ENCODE measurements at regions of chr16 and their contacts with region 1.

Region 1: DNA sequence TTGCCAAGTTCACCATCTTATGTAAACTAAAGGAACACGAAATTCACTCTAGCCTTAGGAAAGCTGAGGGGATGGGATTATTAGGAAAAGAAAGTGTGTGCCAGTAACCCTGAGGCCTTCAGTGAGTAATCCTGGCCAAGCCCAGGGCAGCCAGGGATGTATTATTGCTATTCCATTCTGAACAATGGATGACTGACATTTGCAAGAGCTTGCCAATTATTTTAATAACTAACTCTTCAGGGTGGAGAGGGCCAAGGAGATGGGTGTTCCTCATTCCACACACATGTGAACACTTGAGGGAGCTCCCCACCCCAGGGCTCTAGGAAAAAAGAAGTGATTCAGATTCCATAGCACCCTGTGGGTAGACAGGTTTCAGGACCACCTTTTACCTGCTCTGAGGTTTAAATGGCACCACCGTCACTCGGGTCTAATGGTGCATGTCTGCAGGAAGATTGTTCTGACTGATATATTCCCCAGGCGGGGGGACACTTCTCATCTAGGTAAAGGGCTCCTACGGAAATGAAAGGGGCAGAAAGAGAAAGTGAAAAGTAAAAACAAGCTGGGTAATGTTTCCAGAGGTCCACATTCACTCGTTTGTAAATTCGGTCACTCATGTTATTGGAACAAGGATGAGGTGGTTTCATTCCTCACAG is 41.5 kb downstream of the TK2 start:
- DNase-seq: peak; percentile 80 to 99
- H3K4me3 ChIP-seq: peak overlapping the region; percentile 15; the same call in 1 of the 2 replicates
- H3K27ac ChIP-seq: peak overlapping the region; percentile 81
- H3K4me1 ChIP-seq: peaks cover 78% of the 10 kb centered on the region
- H3K27me3 ChIP-seq: no peaks in the 10 kb centered on the region
- CTCF ChIP-seq: no peak; the same call in 1 of the 2 replicates

Region 2: GRCh38 chr16:66199189-66199588 is 309.2 kb before region 1 on chr16:
- CTCF ChIA-PET with region 1: no interaction called
- POLR2A ChIA-PET with region 1: no interaction called
- intact Hi-C with region 1: no loop called
- DNase-seq: no peak
- H3K4me3 ChIP-seq: no peak overlapping the region
- H3K27ac ChIP-seq: no peak overlapping the region
- H3K4me1 ChIP-seq: no peaks in the 10 kb centered on the region
- H3K27me3 ChIP-seq: peaks cover 53% of the 10 kb centered on the region
- CTCF ChIP-seq: no peak

Region 3: DNA sequence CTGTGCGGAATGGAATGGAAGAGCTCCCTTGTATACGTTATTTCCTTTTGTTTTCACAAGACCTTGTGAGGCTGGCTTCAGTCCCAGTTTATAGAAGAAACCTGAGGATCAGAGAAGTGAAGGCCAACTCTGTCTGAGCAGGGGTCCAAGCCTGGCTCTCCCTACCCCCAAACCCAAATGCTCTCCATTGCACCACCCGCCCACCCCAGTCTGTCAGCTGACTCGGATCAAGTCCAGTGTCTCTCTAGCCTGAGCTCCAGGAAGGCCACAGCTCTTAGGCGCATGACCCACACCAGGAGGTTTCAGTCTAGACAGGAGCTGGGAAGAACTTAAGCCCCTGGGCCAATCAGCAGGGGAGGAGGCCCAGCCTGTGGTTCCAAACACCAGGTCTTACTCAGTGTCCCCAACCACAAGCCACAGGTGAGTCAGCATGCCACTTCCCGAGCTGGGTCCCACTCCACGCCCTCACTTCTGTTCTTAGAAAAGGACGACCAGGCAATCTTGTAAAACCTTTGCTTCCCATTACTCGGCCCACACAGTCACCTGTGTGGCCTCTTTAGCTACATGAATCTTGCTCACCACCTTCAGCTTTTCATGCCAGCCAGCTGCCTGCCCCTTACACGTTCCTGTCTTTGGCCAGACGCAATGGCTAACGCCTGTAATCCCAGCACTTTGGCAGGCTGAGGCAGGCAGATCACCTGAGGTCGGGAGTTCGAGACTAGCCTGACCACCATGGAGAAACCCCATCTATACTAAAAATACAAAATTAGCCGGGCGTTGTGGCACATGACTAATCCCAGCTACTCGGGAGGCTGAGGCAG is 13.8 kb after region 1 on chr16:
- CTCF ChIA-PET with region 1: interaction called, 10 read pairs
- POLR2A ChIA-PET with region 1: interaction called, 5 read pairs
- intact Hi-C with region 1: loop called (anchors 1 kb)
- DNase-seq: peak; percentile 91 to 98
- H3K4me3 ChIP-seq: no peak overlapping the region
- H3K27ac ChIP-seq: peak overlapping the region; percentile 82
- H3K4me1 ChIP-seq: peaks cover 49% of the 10 kb centered on the region
- H3K27me3 ChIP-seq: no peaks in the 10 kb centered on the region
- CTCF ChIP-seq: no peak

Region 4: DNA sequence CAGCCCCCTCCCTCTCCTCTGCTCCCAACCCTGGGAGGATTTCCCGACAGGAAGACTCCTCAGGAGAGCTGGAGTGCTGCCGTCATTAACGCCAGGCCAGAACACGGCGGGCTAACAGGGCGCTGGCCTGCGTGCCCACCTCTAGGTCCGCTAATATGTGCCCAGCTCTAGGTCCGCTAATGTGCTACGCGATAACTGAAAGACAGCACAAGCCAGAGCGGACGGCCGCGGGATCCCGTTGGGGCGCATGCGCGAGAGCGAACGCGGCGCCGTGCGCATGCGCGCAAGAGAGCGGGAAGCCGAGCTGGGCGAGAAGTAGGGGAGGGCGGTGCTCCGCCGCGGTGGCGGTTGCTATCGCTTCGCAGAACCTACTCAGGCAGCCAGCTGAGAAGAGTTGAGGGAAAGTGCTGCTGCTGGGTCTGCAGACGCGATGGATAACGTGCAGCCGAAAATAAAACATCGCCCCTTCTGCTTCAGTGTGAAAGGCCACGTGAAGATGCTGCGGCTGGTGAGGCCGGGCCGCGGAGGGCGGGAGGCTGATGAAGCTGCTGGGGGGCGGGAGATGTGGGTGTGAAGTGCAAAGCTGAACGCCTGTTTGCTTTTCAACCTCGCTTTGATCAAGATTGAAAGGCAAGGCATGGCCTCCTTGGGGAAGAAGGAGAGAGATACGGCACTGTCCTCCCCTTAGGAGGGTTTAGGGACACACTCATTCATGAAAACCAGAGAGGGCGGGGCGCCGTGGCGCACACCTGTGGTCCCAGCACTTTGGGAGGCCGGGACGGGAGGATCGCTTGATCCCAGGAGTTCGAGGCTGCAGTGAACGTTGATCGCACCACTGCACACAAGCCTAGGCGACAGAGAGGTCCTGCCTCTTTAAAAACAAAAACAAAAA is 44.1 kb after region 1 on chr16 and contains the start of gene CKLF:
- CTCF ChIA-PET with region 1: interaction called, 4 read pairs
- POLR2A ChIA-PET with region 1: interaction called, 4 read pairs
- intact Hi-C with region 1: loop called (anchors 2 kb)
- DNase-seq: peak; percentile 75 to 91
- H3K4me3 ChIP-seq: peak within 1 kb of the TSS; percentile 66
- H3K27ac ChIP-seq: no peak within 1 kb of the TSS
- H3K4me1 ChIP-seq: peaks cover 30% of the 10 kb centered on the region
- H3K27me3 ChIP-seq: no peaks in the 10 kb centered on the region
- CTCF ChIP-seq: no peak
- total RNA-seq, gene CKLF: 77.1 and 86.4 TPM in 2 replicates

Region 5: GRCh38 chr16:66580605-66581209 is 72.3 kb after region 1 on chr16:
- CTCF ChIA-PET with region 1: interaction called, 3 read pairs
- POLR2A ChIA-PET with region 1: interaction called, 4 read pairs
- intact Hi-C with region 1: loop called (anchors 1 kb)
- DNase-seq: peak; percentile 25 to 75
- H3K4me3 ChIP-seq: no peak overlapping the region
- H3K27ac ChIP-seq: no peak overlapping the region
- H3K4me1 ChIP-seq: peaks cover 22% of the 10 kb centered on the region
- H3K27me3 ChIP-seq: no peaks in the 10 kb centered on the region
- CTCF ChIP-seq: no peak

Region 6: GRCh38 chr16:66880288-66881013 is 372.1 kb after region 1 on chr16 and contains the start of gene PDP2:
- CTCF ChIA-PET with region 1: no interaction called
- POLR2A ChIA-PET with region 1: interaction called, 17 read pairs
- intact Hi-C with region 1: no loop called
- DNase-seq: peak; percentile 86 to 95
- H3K4me3 ChIP-seq: peak within 1 kb of the TSS; percentile 99
- H3K27ac ChIP-seq: no peak within 1 kb of the TSS
- H3K4me1 ChIP-seq: peaks cover 13% of the 10 kb centered on the region; the same call in 1 of the 2 replicates
- H3K27me3 ChIP-seq: no peaks in the 10 kb centered on the region
- CTCF ChIP-seq: no peak
- total RNA-seq, gene PDP2: 17.4 and 21.6 TPM in 2 replicates

Measured in PC-9 (cell line).